IMR-90 (cell line): ENCODE measurements at regions of chr11 and their contacts with region 1.

Region 1: DNA sequence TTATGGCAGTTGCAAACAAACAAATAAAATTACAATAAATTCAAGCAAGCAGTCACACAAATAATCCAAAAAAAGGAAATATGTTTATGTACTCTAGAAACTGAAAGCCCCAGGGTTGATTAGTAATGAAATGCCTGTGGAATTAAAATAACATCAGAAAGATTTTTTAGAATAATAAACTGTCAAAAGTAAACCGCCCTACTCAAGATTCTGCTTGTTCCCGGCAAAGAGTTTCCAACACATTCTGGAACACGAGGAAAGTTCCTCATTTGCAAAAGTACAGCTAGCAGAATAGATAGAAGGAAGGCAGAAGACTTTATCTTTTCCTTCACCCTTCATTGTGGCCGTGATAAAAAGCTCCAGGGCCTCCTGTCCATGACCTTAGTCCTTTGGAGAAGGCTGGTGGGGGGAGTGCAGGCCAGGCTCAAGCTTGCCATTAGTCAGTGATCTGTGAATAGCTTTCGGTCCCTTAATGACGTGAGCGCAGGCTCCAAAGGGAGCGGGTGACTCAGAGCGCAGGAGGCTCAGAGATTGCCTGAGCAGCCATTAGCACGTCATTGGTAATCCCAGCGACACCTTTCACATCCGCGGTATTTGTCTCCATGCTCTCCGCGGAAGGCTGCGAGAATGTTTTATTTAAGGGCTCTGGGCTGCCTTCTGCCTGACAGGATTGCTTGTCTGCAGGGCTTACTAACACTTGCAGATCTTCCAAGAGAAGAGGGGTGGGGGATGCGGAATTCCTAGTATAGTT is 458.3 kb downstream of the METTL15 start:
- DNase-seq: peak; percentile 100
- ATAC-seq: peak; percentile 98
- H3K4me3 ChIP-seq: peak overlapping the region; percentile 3; the same call in 1 of the 2 replicates
- H3K27ac ChIP-seq: peak overlapping the region; percentile 78
- H3K4me1 ChIP-seq: peaks cover 5% of the 10 kb centered on the region
- H3K27me3 ChIP-seq: no peaks in the 10 kb centered on the region
- CTCF ChIP-seq: no peak
- POLR2A ChIP-seq: peak; percentile 13; the same call in 1 of the 2 replicates
- RAD21 ChIP-seq: peak; percentile 40

Region 2: GRCh38 chr11:28490773-28491382 is 75.6 kb before region 1 on chr11:
- CTCF ChIA-PET with region 1: no interaction called
- POLR2A ChIA-PET with region 1: no interaction called
- dilution Hi-C with region 1: no loop called
- in situ Hi-C with region 1: no loop called
- intact Hi-C with region 1: no loop called
- DNase-seq: no peak
- ATAC-seq: no peak
- H3K4me3 ChIP-seq: no peak overlapping the region
- H3K27ac ChIP-seq: no peak overlapping the region
- H3K4me1 ChIP-seq: peaks cover 2% of the 10 kb centered on the region
- H3K27me3 ChIP-seq: no peaks in the 10 kb centered on the region
- CTCF ChIP-seq: no peak
- POLR2A ChIP-seq: no peak
- RAD21 ChIP-seq: no peak

Region 3: DNA sequence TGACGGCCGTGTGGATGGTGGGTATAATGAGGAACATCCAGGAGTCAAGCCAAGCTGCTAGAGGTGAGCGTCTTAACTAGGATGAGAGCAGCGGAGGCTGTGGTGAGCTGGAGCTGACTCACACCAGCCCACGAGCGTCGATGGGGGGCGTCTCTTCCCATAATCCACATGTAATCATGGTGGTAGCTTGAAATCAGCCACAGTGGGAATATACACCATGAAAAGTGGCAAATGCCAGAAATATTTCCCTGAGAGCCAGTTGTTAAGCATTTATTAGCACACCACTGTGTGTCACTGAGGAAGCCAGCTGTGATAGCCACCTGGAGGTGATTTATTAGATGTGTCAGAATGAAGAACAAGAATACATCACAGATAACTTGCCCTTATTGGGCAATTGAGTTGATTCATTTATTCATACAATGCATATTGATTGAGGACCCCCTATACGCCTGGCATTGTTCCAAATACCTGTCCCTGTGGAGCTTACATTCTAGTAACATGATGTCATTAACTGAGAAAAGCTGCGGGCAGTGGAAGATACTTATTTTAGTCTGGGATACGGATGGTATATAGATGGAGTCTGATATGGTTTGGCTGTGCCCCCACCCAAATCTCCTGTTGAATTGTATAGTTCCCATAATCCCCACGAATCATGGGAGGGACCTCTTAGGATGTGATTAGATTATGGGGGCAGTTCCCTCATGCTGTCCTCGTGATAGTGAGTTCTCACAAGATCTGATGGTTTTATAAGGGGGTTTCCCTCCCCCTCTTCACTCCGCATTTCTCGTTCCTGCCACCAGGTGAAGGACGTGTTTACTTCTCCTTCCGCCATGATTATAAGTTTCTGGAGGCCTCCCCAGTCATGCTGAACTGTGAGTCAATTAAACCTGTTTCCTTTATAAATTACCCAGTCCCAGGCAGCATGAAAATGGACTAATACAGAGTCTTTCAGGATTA is 15.1 kb after region 1 on chr11:
- CTCF ChIA-PET with region 1: no interaction called
- POLR2A ChIA-PET with region 1: no interaction called
- dilution Hi-C with region 1: no loop called
- in situ Hi-C with region 1: no loop called
- intact Hi-C with region 1: no loop called
- DNase-seq: peak; percentile 78
- ATAC-seq: no peak
- H3K4me3 ChIP-seq: no peak overlapping the region
- H3K27ac ChIP-seq: no peak overlapping the region
- H3K4me1 ChIP-seq: peaks cover 5% of the 10 kb centered on the region; the same call in 1 of the 2 replicates
- H3K27me3 ChIP-seq: no peaks in the 10 kb centered on the region
- CTCF ChIP-seq: no peak
- POLR2A ChIP-seq: no peak
- RAD21 ChIP-seq: no peak; the same call in 1 of the 2 replicates

Region 4: DNA sequence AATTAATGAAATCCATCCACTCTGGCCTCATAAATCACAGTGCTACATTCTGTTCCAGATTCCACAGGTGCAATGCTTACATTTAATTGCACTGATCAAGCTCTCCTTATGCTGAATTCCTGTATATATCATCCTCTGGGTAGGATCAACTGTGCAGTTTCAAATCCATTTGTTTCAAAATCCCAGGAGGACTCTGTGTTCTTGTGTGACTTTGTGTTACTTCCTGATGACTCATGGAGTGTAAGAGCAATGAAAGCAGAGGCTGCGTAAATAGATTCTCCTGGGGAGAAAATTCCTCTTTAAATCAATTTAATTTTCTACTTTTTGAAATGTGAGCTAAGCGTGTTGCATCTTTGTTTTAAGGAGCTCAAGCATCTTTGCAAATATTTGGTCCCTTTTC is 294.4 kb after region 1 on chr11:
- CTCF ChIA-PET with region 1: no interaction called
- POLR2A ChIA-PET with region 1: no interaction called
- dilution Hi-C with region 1: no loop called
- in situ Hi-C with region 1: no loop called
- intact Hi-C with region 1: no loop called
- DNase-seq: peak; percentile 74
- ATAC-seq: peak; percentile 91
- H3K4me3 ChIP-seq: no peak overlapping the region
- H3K27ac ChIP-seq: no peak overlapping the region
- H3K4me1 ChIP-seq: peaks cover 2% of the 10 kb centered on the region; the same call in 1 of the 2 replicates
- H3K27me3 ChIP-seq: no peaks in the 10 kb centered on the region
- CTCF ChIP-seq: no peak
- POLR2A ChIP-seq: no peak
- RAD21 ChIP-seq: no peak

Region 5: GRCh38 chr11:29243616-29244015 is 677.1 kb after region 1 on chr11:
- CTCF ChIA-PET with region 1: no interaction called
- POLR2A ChIA-PET with region 1: no interaction called
- dilution Hi-C with region 1: no loop called
- in situ Hi-C with region 1: no loop called
- intact Hi-C with region 1: loop called (anchors 5 kb)
- DNase-seq: peak; percentile 72
- ATAC-seq: peak; percentile 97
- H3K4me3 ChIP-seq: no peak overlapping the region
- H3K27ac ChIP-seq: peak overlapping the region; percentile 87
- H3K4me1 ChIP-seq: peaks cover 3% of the 10 kb centered on the region; the same call in 1 of the 2 replicates
- H3K27me3 ChIP-seq: no peaks in the 10 kb centered on the region
- CTCF ChIP-seq: no peak
- POLR2A ChIP-seq: no peak
- RAD21 ChIP-seq: no peak

Region 6: GRCh38 chr11:29343465-29344333 is 777.2 kb after region 1 on chr11:
- CTCF ChIA-PET with region 1: no interaction called
- POLR2A ChIA-PET with region 1: no interaction called
- dilution Hi-C with region 1: no loop called
- in situ Hi-C with region 1: loop called (anchors 25 kb)
- intact Hi-C with region 1: no loop called
- DNase-seq: peak; percentile 34
- ATAC-seq: peak; percentile 87
- H3K4me3 ChIP-seq: no peak overlapping the region
- H3K27ac ChIP-seq: no peak overlapping the region
- H3K4me1 ChIP-seq: no peaks in the 10 kb centered on the region
- H3K27me3 ChIP-seq: no peaks in the 10 kb centered on the region
- CTCF ChIP-seq: peak; percentile 67
- POLR2A ChIP-seq: no peak
- RAD21 ChIP-seq: peak; percentile 50